ENCODE measurements at regions of chr15 and their contacts with region 1.

Region 1: DNA sequence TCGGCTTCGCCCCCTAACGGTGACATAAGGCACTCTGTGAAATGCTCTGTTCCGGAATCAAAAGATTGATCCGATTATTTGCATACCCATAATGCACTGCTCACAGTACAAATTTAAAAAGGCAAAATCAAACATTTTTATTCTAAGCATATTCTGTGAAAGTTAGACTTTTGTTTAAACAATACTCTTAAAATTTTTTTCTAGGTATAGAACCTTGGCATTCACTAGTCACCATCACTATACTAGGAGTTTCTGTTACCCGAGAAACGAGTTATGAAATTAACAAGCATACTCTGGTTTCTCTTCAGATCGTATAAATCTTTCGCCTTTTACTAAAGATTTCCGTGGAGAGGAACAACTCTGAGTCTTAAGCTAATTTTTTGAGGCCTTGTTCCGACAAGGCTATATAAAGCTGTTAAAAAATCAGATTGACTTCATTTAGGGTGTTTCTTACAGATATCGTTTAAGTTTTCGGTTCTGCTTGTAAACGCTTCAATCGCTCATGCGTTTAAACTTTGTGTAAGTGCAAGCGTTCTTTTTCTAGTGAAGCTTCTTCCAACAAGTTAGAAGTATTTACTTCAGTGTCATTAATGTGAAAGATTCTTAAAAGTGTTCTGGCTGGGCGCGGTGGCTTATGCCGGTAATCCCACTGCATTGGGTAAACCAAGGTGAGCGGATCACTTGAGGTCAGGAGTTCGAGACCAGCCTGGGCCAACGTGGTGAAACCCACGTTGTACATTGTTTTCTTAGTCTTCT is at the start of gene RNU5B-1:
- DNase-seq: peak; percentile 93
- ATAC-seq: peak; percentile 62
- H3K4me3 ChIP-seq: peak within 1 kb of the TSS; percentile 62 to 81 (median 73)
- H3K27ac ChIP-seq: peak within 1 kb of the TSS; percentile 91
- H3K4me1 ChIP-seq: peaks cover 42% of the 10 kb centered on the region
- H3K27me3 ChIP-seq: no peaks in the 10 kb centered on the region; a peak in 1 of 5 replicates
- CTCF ChIP-seq: peak; percentile 78
- EP300 ChIP-seq: peak in 1 of 2 experiments; percentile 43; a peak in 2 of 4 replicates
- POLR2A ChIP-seq: peak; percentile 98 to 100
- RAD21 ChIP-seq: peak; percentile 63
- total RNA-seq, gene RNU5B-1: 417 and 1,646 TPM in 2 replicates

Region 2: GRCh38 chr15:65110676-65111292 is 193.8 kb before region 1 on chr15:
- CTCF ChIA-PET with region 1: no interaction called
- POLR2A ChIA-PET with region 1: no interaction called
- in situ Hi-C with region 1: no loop called
- intact Hi-C with region 1: no loop called
- DNase-seq: no peak
- ATAC-seq: no peak
- H3K4me3 ChIP-seq: no peak overlapping the region
- H3K27ac ChIP-seq: no peak overlapping the region
- H3K4me1 ChIP-seq: no peaks in the 10 kb centered on the region
- H3K27me3 ChIP-seq: no peaks in the 10 kb centered on the region; a peak in 1 of 5 replicates
- CTCF ChIP-seq: no peak
- EP300 ChIP-seq: no peak
- POLR2A ChIP-seq: no peak
- RAD21 ChIP-seq: no peak

Region 3: DNA sequence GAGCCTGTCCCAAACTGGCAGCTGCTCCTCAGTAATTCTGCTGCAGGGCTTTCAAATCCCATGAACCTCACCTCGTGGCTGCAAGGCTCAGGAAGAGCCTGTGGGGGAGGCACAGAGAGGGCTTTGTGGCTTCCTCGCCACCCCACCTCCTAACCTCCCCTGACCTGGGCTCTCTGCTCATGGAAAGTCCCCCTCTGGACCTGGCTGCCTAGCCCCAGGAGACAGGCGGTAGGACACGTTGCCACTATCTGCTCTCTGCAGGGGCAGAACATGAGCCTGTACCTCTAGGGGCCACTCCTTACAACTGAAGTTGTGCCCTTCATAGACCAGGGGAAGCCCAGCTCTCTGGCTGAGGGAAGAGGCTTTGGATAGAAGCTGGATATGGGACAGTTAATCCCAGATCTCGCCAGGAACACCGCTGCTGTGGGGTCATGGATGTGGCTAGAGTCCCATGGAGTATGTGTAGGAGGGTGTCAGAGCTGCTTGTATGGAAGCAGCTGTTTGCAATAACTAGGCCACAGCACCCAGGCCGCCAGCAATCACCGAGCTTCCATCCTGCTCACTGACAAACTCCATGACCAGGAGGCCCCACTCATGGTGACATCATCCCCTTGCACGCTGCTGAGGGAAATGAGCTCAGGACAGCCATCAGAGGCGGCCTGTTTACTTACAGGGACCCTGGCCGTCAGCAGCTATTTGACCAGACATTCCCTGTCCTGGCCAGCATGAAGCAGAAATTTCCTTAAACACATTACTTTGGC is 59.3 kb before region 1 on chr15:
- CTCF ChIA-PET with region 1: no interaction called
- POLR2A ChIA-PET with region 1: interaction called, 20 read pairs
- in situ Hi-C with region 1: no loop called
- intact Hi-C with region 1: no loop called
- DNase-seq: peak; percentile 75
- ATAC-seq: peak; percentile 81
- H3K4me3 ChIP-seq: peak overlapping the region in 2 of 3 experiments; percentile 19 to 52; a peak in 4 of 6 replicates
- H3K27ac ChIP-seq: peak overlapping the region; percentile 37
- H3K4me1 ChIP-seq: peaks cover 51% of the 10 kb centered on the region
- H3K27me3 ChIP-seq: no peaks in the 10 kb centered on the region
- CTCF ChIP-seq: no peak
- EP300 ChIP-seq: no peak
- POLR2A ChIP-seq: peak in 1 of 2 experiments; percentile 36; a peak in 1 of 4 replicates
- RAD21 ChIP-seq: no peak

Region 4: DNA sequence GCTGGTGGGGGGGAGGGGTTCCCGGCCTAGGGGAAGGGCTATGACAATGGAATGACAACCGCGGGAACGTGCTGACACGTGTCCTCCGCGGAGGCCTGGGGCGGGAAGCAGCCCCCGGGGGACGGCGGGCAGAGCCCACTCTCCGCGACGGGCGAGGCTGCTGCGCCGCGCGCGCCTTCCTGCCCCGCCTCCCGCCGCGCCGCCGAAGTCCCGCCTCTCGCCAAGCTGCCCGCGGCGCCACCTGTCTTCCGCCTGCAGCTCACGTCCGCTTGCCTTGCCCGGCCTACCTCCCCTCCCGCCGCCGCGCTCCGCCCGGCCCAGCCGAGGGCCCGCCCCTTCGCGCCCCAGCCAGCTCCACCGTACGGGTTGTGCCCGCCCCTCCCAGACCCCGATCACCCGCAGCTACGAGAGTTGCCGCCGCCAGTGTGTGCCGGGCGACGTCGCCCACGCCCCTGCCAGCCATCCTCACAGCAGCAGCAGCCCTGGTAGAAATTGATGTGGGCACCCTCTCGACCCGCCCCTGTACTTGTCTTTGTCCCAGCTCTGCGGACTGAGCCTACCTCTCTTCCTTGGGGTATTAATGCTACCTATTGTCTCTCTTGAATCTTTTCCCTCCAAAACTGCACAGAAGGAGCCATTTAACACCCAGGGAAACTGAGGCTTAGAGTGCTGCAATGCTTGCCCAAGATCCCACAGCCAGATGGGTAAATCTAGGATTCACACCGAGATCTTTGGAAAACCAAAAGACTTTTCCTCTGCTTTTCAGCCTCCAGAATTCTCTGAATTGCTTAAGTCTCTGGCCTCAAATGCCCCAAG is 17.7 kb before region 1 on chr15 and contains the start of gene PARP16:
- CTCF ChIA-PET with region 1: no interaction called
- POLR2A ChIA-PET with region 1: interaction called, 40 read pairs
- in situ Hi-C with region 1: no loop called
- intact Hi-C with region 1: no loop called
- DNase-seq: peak; percentile 80
- ATAC-seq: peak; percentile 94
- H3K4me3 ChIP-seq: peak within 1 kb of the TSS; percentile 53 to 82 (median 78)
- H3K27ac ChIP-seq: peak within 1 kb of the TSS; percentile 88
- H3K4me1 ChIP-seq: peaks cover 46% of the 10 kb centered on the region
- H3K27me3 ChIP-seq: no peaks in the 10 kb centered on the region; a peak in 1 of 5 replicates
- CTCF ChIP-seq: peak; percentile 71
- EP300 ChIP-seq: no peak
- POLR2A ChIP-seq: peak; percentile 52 to 69
- RAD21 ChIP-seq: peak; percentile 46; the same call in 1 of the 2 replicates
- total RNA-seq, gene PARP16: 6.7 and 6.8 TPM in 2 replicates

Region 5: GRCh38 chr15:65377104-65377975 is 72.8 kb after region 1 on chr15:
- CTCF ChIA-PET with region 1: no interaction called
- POLR2A ChIA-PET with region 1: interaction called, 44 read pairs
- in situ Hi-C with region 1: no loop called
- intact Hi-C with region 1: no loop called
- DNase-seq: no peak
- ATAC-seq: peak; percentile 65
- H3K4me3 ChIP-seq: peak overlapping the region; percentile 84 to 97 (median 92)
- H3K27ac ChIP-seq: peak overlapping the region; percentile 99
- H3K4me1 ChIP-seq: peaks cover 66% of the 10 kb centered on the region
- H3K27me3 ChIP-seq: no peaks in the 10 kb centered on the region; a peak in 1 of 5 replicates
- CTCF ChIP-seq: peak; percentile 7; the same call in 1 of the 2 replicates
- EP300 ChIP-seq: no peak
- POLR2A ChIP-seq: peak in 1 of 2 experiments; percentile 16; a peak in 1 of 4 replicates
- RAD21 ChIP-seq: no peak; the same call in 1 of the 2 replicates

Measured in HepG2 (cell line).